HCT116 (cell line): ENCODE measurements at regions of chr5 and their contacts with region 1.

Region 1: DNA sequence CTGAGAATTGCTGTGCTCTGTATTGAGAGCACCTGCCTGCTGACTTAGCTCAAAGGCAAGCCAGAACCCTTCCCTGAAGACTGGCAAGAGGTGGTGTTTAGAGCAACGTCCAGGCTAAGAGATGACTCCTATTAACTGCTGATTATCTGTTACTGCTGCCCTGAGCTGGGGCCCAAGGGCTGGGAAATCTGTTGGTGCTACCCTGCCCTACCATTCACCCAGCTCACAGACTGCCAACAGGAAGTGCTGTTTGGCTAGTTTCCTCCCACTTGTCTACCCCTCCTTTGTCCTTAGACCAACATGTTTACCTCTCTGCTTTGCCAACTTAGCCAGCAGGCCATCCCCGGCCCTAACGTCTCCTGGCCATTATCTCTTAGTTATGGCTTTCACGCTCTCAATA is 6.9 kb downstream of the RAB24 start:
- DNase-seq: no peak
- ATAC-seq: no peak
- H3K4me3 ChIP-seq: no peak overlapping the region
- H3K27ac ChIP-seq: no peak overlapping the region
- H3K4me1 ChIP-seq: peaks cover 6 to 28% of the 10 kb centered on the region in 2 experiments
- H3K27me3 ChIP-seq: no peaks in the 10 kb centered on the region
- CTCF ChIP-seq: no peak
- POLR2A ChIP-seq: no peak
- RAD21 ChIP-seq: no peak

Region 2: DNA sequence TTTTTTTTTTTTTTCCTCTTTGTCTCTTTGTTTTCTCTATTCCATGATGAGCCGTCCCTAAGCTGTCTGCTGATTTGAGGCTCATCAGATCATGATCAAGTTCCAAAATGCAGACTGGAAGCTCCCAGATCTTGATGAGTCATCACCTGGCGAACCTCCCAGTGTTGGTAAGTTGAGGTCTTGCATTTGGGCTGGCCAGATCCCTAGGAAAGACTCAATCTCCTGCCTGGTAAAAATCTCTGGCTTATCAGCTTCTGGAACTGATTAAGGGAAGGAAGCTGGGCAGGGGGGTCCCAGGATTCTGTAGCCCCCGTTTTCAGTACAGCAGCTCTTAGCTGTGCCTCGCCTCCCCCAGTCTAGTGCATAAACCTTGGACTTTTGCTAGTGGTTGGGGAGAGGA is 580.3 kb before region 1 on chr5:
- CTCF ChIA-PET with region 1: no interaction called
- POLR2A ChIA-PET with region 1: no interaction called
- RAD21 ChIA-PET with region 1: no interaction called
- intact Hi-C with region 1: no loop called
- DNase-seq: peak; percentile 15
- ATAC-seq: no peak; the same call in 1 of the 2 replicates
- H3K4me3 ChIP-seq: no peak overlapping the region
- H3K27ac ChIP-seq: no peak overlapping the region
- H3K4me1 ChIP-seq: peaks cover 6% of the 10 kb centered on the region in 2 experiments
- H3K27me3 ChIP-seq: no peaks in the 10 kb centered on the region
- CTCF ChIP-seq: no peak
- POLR2A ChIP-seq: no peak
- RAD21 ChIP-seq: no peak

Region 3: GRCh38 chr5:177311723-177312648 is 15.4 kb after region 1 on chr5 and contains the start of gene MXD3:
- CTCF ChIA-PET with region 1: interaction called, 17 read pairs
- POLR2A ChIA-PET with region 1: no interaction called
- RAD21 ChIA-PET with region 1: no interaction called
- intact Hi-C with region 1: no loop called
- DNase-seq: peak; percentile 91
- ATAC-seq: peak; percentile 77
- H3K4me3 ChIP-seq: peak within 1 kb of the TSS; percentile 82 to 87
- H3K27ac ChIP-seq: peak within 1 kb of the TSS; percentile 82
- H3K4me1 ChIP-seq: peaks cover 18 to 45% of the 10 kb centered on the region in 2 experiments
- H3K27me3 ChIP-seq: no peaks in the 10 kb centered on the region
- CTCF ChIP-seq: no peak
- POLR2A ChIP-seq: no peak
- RAD21 ChIP-seq: no peak
- total RNA-seq, gene MXD3: 37.6 TPM

Region 4: DNA sequence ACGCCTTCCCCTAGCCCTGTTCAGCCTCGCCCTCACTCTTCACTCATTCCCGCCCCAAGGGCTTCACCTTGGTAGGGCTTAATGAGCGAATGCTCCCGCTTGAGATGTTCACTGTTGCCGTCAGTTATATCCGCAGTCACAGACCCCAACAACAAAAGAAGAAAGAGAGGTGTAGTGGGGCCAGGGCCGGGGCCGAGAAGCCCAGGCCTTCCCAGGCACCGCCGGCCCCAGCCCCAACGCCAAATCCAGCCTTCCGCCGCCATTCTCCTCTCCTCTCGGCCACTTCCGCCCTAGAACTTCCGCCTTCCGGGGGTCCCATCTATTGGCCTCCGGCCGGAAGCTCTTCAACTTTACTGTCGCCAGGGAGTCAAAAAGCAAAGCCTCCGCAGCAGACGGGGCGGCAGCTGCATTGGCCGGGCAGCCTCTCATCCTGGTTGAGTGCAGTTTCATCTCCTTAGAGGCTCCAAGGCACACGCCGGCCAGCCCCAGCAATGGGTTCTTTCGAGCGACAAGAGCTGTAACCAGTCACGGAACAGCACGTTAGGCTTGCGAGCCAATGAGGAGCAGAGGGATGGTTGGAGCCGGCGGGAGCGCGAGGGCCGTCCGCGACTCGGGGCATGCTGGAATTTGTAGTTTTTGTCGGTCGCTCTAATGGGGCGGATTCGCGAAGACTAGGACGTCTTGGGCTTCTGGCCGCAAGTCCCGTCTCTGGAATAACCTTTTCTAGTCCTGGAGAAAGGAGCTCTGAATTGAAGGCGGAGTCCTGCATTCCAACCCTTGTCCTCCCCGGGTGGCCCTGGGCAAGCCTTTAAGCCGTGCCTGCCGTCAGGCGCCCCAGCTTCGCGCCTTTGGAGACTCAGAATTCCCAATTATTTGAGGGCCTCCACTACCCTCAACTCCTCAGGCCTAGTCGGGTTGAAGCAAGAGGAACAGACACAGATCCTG is 55.1 kb after region 1 on chr5 and contains the start of gene LMAN2:
- CTCF ChIA-PET with region 1: no interaction called
- POLR2A ChIA-PET with region 1: no interaction called
- RAD21 ChIA-PET with region 1: no interaction called
- intact Hi-C with region 1: no loop called
- DNase-seq: peak; percentile 93
- ATAC-seq: peak; percentile 98
- H3K4me3 ChIP-seq: peak within 1 kb of the TSS; percentile 98 to 100
- H3K27ac ChIP-seq: peak within 1 kb of the TSS; percentile 77
- H3K4me1 ChIP-seq: peaks cover 14 to 16% of the 10 kb centered on the region in 2 experiments
- H3K27me3 ChIP-seq: no peaks in the 10 kb centered on the region
- CTCF ChIP-seq: no peak
- POLR2A ChIP-seq: peak; percentile 44
- RAD21 ChIP-seq: no peak
- total RNA-seq, gene LMAN2: 128 TPM

Region 5: DNA sequence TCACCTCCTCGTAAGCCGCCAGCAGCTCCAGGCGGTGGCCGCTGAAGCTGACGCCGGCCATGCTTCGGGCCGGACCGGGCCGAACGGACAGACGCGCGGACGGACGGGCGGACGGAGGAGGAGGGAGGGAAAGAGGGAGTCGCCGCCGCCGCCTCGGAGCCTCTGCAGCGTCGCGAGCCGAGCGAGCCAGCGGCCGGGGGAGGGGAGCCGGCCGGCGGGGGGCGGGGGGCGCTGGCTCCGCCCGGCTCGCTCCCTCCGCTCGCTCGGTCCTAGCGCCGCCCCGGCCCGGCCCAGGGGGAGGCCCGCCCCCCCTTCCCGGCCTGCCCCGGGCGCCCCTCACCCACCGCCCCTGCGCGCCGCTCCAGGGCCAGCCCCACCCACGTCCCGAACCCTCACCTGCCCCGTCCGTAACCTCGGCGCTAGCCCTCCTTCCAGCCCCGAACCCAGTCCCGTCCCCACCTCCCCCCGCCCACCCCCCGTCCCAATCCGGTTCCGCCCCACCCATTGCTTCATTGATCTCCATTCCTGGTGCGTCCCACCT is 176.9 kb after region 1 on chr5 and contains the start of gene DBN1:
- CTCF ChIA-PET with region 1: no interaction called
- POLR2A ChIA-PET with region 1: no interaction called
- RAD21 ChIA-PET with region 1: no interaction called
- intact Hi-C with region 1: no loop called
- DNase-seq: no peak
- ATAC-seq: peak; percentile 78
- H3K4me3 ChIP-seq: peak within 1 kb of the TSS; percentile 85 to 92
- H3K27ac ChIP-seq: peak within 1 kb of the TSS; percentile 84
- H3K4me1 ChIP-seq: peaks cover 8 to 55% of the 10 kb centered on the region in 2 experiments; a peak in 3 of 4 replicates
- H3K27me3 ChIP-seq: no peaks in the 10 kb centered on the region
- CTCF ChIP-seq: no peak
- POLR2A ChIP-seq: no peak
- RAD21 ChIP-seq: no peak
- total RNA-seq, gene DBN1: 144 TPM